ENCODE measurements at regions of chr16 and their contacts with region 1.

Region 1: DNA sequence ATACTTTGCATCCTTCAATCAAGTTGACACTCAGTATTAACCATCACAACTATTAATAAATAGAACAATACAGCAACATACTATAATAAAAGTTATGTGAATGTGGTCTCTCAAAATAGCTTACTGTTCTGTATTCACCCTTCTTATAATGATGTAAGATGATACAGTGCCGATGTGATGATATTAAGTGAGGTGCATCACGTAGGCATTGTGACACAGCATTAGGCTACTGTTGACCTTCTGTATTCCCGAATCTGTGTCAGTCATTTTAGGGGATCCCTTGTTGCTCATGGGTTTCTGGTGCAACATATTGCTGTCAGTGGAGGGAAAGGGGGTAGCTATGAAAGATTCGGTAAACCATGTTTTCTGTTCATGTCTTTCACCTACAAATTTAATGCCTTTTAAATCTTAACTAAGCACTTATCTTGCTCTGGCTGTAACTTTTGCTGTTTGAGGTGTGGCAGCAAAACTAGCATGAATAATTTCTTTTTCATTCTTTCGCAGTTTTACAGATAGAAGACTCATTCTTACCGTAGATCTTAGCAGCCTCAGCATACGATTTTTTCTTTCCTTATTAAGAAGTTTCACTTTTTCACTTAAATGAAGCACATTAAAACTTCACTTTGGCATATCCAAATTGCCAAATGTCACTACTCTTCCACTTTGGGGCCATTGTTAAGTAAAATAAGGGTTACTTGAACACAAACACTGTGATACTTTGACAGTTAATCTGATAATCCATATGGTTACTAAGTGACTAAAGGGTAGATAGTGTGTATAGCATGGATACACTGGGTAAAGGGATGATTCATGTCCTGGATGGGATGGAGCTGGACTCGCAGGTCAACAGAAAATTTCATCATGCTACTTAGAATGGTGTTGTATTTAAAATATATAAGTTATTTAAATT is 29.6 kb downstream of the NFAT5 start:
- DNase-seq: no peak
- H3K4me3 ChIP-seq: no peak overlapping the region
- CTCF ChIP-seq: no peak

Region 2: GRCh38 chr16:69581297-69581696 is 14.1 kb before region 1 on chr16:
- CTCF ChIA-PET with region 1: interaction called, 12 read pairs
- POLR2A ChIA-PET with region 1: no interaction called
- DNase-seq: no peak
- H3K4me3 ChIP-seq: no peak overlapping the region
- CTCF ChIP-seq: no peak

Measured in AG04449 (cell line).